SK-N-SH (cell line): ENCODE measurements at regions of chr16 and their contacts with region 1.

Region 1: DNA sequence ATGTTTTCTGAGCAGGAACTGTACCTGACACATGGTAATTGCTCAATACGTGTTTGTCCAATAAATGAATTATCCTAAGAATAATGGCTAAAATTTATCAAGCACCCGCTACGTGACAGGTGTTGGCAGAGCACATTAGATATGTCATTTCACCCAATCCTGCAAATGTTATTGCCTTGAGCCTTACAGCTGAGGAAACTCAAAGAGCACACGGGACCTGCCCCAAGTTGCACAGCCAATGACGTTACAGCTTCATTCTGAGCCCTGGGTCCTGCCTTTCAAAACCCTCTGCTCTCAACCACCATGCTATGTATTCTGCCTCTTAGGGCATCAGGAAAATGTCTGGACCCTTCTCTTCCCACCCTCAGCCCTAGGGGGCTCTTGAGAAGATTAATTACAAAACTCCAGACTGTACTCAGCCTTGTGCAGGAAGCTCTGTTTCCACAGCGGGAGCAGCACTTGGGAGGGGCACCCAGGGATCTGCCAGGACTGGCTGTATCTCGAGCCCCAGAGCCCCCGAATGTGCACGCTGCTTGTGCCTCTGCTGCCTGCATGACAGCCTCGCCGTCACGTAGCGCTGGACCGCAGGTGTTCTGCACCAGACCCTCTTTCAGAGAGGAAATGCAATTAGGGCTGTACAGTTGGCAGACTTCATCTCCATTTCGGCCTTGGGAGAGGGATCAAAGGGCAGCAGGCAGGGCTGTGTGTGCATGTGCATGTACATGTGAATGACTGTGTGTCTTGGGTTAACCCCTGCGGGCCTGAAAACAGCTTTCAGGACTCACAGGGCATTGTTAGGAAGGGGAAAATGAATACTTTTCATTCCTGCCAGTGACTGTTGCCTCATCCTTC is 71.6 kb downstream of the GPR139 start:
- DNase-seq: peak; percentile 48
- H3K4me3 ChIP-seq: no peak overlapping the region
- H3K27ac ChIP-seq: peak overlapping the region in 1 of 2 experiments; percentile 83; a peak in 2 of 4 replicates
- H3K4me1 ChIP-seq: peaks cover 0 to 22% of the 10 kb centered on the region in 2 experiments; a peak in 1 of 4 replicates
- H3K27me3 ChIP-seq: no peaks in the 10 kb centered on the region
- CTCF ChIP-seq: no peak
- EP300 ChIP-seq: peak in 1 of 2 experiments; percentile 51; a peak in 1 of 4 replicates
- RAD21 ChIP-seq: no peak

Region 2: DNA sequence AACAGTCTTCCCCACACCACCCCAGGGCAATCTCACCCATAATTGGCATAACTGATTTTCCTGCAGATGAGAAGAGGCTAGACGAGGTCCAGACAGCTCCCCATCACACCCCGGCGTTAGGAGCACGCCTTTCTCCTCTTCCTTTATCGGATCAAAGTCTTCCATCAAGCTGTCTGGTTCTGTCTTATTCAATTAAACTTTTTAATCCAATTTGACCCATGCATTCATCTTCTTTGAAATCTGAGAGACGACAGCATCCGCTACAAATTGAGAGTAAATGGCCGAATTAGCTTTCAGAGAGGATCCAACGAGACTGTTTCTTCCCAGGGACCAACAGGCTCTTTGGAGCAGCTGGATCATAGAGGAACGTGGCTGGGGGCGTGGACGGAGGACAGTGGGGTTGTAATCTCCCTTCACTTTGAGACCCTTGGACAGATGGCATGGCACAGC is 73.0 kb before region 1 on chr16:
- CTCF ChIA-PET with region 1: no interaction called
- POLR2A ChIA-PET with region 1: interaction called, 17 read pairs
- DNase-seq: peak; percentile 47
- H3K4me3 ChIP-seq: no peak overlapping the region
- H3K27ac ChIP-seq: peak overlapping the region in 1 of 2 experiments; percentile 74; a peak in 1 of 4 replicates
- H3K4me1 ChIP-seq: peaks cover 0 to 14% of the 10 kb centered on the region in 2 experiments; a peak in 2 of 4 replicates
- H3K27me3 ChIP-seq: no peaks in the 10 kb centered on the region; the same call in 1 of the 2 replicates
- CTCF ChIP-seq: no peak
- EP300 ChIP-seq: peak in 1 of 2 experiments; percentile 59; a peak in 1 of 4 replicates
- RAD21 ChIP-seq: no peak

Region 3: DNA sequence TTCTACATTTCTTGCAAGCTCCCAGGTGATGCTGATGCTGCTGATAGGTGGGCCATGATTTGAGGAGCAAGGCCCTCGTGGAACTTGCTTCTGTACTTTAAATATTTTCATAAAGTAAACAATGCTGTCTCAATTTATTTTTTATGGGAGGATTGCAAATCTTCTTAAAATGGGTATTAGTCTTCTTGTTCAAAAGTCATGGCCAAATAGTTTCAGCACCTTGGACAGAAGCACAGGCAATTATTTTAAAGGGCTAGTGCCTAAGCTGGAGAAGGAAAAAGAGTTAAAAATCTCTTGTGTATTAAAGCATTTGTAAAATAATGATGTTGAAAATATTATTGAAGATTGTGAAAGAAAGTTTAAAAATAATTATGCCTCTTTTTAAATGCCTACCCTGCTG is 21.1 kb after region 1 on chr16:
- CTCF ChIA-PET with region 1: no interaction called
- POLR2A ChIA-PET with region 1: no interaction called
- DNase-seq: no peak
- H3K4me3 ChIP-seq: no peak overlapping the region
- H3K27ac ChIP-seq: no peak overlapping the region
- H3K4me1 ChIP-seq: no peaks in the 10 kb centered on the region; a peak in 1 of 4 replicates
- H3K27me3 ChIP-seq: no peaks in the 10 kb centered on the region
- CTCF ChIP-seq: no peak
- EP300 ChIP-seq: no peak
- RAD21 ChIP-seq: no peak

Region 4: DNA sequence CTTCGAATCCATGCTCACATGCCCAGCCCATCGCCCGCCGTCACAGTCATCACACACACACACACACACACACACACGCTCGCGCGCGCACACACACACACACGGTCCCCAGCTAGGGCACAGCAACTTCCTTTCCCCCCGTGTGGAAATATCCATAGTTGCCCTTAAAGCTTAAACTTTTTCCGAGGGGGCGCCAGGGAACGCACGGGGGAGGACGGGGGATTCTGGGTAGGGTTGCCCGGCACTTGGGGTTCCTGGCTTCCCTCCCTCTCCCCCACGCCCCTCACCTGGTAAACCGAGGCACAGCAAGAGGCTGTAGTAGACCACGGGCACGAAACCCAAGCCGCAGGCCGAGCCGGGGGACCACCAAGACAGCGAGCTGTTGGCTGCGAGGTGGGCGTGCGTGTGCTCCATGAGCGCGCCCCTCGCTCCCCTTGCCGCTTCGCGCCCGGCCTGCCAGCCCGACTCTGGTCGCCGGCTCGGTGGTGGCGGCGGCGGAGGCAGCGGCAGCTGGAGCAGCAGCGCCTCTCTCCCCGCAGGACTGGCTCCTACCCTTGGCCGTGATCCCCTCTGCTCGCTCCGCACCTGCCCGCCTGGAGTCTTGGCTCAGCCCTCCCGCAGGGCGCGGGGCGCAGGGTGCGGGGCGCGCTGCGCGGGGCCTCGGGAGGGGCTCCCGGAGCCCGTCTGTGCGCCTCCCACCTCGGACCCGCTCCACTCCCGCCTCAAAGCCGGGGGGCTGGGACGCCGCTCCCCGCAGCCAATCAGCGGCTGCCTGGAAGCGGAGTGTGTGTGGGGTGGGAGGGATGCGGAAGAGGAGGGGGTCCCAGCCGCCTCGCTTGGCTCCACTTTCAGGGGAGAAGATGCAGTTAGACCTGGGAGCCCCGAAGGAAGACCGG is 71.4 kb after region 1 on chr16 and contains the start of gene GPR139:
- CTCF ChIA-PET with region 1: interaction called, 3 read pairs
- POLR2A ChIA-PET with region 1: interaction called, 14 read pairs
- DNase-seq: peak; percentile 66
- H3K4me3 ChIP-seq: peak within 1 kb of the TSS in 1 of 2 experiments; percentile 36; a peak in 1 of 4 replicates
- H3K27ac ChIP-seq: peak within 1 kb of the TSS in 1 of 2 experiments; percentile 26; a peak in 1 of 4 replicates
- H3K4me1 ChIP-seq: no peaks in the 10 kb centered on the region; a peak in 1 of 4 replicates
- H3K27me3 ChIP-seq: no peaks in the 10 kb centered on the region; the same call in 1 of the 2 replicates
- CTCF ChIP-seq: no peak
- EP300 ChIP-seq: no peak
- RAD21 ChIP-seq: no peak
- polyA plus RNA-seq, gene GPR139: not detected in 2 replicates